Keratinocyte (primary cell): ENCODE measurements at regions of chr9 and their contacts with region 1.

Region 1: GRCh38 chr9:18490635-18491370 is 16.9 kb downstream of the ADAMTSL1 start:
- DNase-seq: peak; percentile 78
- H3K4me3 ChIP-seq: peak overlapping the region in 1 of 3 experiments; percentile 22
- H3K27ac ChIP-seq: peak overlapping the region; percentile 70
- H3K4me1 ChIP-seq: peaks cover 47% of the 10 kb centered on the region
- H3K27me3 ChIP-seq: no peaks in the 10 kb centered on the region
- CTCF ChIP-seq: no peak

Region 2: DNA sequence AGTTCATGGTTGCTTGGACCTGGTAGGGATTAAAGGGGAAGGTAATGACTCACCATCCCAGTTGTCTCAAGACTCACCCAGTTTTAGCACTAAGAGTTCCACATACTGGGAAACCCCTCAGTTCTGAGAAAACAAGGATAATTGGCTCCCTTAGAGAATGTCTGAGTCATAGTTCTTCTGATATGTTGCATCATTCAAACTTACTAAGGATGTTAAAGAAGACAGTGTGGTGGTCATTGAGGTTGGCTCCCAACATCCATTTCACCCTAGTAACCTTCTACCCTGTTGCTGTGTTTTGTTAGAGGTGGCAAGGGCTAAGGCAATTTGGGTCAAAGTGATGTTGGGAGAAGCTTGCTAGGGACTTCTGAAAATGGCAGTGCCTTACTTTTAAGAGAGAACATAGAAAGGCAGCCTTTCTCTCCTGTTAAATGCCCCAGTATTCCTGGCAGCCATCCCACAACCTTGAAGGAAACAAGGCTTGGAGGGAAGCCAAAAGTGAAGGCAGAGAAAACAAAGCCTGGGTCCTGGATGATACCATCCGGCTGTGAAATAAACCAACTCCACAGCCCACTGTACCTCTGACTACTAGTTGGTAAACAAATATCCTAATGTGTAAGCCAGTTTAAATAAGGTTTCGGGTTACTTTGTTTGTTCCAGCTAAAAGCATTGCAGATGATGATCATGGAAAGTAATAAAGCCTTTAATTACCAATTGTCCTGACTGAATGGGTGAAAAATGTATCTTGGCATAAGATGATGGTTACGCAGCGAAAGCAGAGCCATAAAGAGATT is 97.3 kb before region 1 on chr9:
- dilution Hi-C with region 1: loop called (anchors 25 kb)
- DNase-seq: peak; percentile 75
- H3K4me3 ChIP-seq: no peak overlapping the region
- H3K27ac ChIP-seq: peak overlapping the region; percentile 73
- H3K4me1 ChIP-seq: peaks cover 14% of the 10 kb centered on the region
- H3K27me3 ChIP-seq: no peaks in the 10 kb centered on the region
- CTCF ChIP-seq: no peak